Activated CD4-positive, alpha-beta T cell treated with anti-CD3 and anti-CD28 coated beads for 36 hours (primary cell): ENCODE measurements at regions of chr2 and their contacts with region 1.

Region 1: DNA sequence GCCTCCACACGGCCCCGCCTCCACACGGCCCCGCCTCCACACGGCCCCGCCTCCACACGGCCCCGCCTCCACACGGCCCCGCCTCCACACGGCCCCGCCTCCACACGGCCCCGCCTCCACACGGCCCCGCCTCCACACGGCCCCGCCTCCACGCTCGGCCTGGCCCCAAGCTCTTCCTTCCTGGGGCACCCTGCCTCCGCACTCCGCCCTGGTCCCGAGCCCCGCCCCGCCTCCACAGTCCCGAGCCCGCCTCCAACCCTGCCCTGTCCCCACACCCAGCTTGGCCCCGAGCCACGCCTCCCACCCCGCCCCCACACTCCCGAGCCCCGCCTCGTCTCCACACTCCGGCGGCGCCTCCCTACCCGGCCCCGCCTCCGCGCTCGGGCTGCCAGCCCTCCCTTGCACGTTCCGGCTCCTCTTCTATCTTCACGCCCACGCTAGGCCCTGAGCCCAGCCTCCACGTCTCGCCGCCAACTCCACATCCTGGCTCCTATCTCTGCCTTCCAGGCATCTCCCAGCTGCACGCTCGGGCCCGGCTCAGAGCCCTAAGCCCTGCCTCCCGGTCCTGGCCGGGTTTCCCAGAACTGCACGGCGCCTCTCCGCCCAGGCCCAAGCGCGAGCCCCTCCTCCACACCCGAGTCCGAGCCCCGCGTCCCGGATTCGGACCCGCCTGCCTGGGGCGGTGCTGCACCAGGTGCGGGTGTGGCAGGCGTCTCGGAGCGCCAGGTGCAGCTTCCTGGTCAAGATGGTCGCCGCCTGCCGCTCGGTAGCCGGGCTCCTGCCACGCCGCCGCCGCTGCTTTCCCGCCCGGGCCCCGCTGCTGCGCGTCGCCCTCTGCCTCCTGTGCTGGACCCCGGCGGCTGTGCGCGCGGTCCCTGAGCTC is at the start of gene TMEM87B:
- DNase-seq: peak; percentile 100
- ATAC-seq: peak; percentile 79
- H3K4me3 Mint-ChIP-seq: peak within 1 kb of the TSS; percentile 97
- H3K27ac Mint-ChIP-seq: peak within 1 kb of the TSS; percentile 99
- H3K4me1 Mint-ChIP-seq: peaks cover 37% of the 10 kb centered on the region
- H3K27me3 Mint-ChIP-seq: no peaks in the 10 kb centered on the region
- total RNA-seq, gene TMEM87B: 14.5 to 17.6 TPM

Region 2: GRCh38 chr2:111883661-111884591 is 171.2 kb before region 1 on chr2 and contains the start of gene ANAPC1:
- CTCF ChIA-PET with region 1: interaction called, 19 read pairs
- POLR2A ChIA-PET with region 1: interaction called, 3 read pairs
- intact Hi-C with region 1: loop called (anchors 1 to 2 kb)
- DNase-seq: peak; percentile 92
- ATAC-seq: peak; percentile 95
- H3K4me3 Mint-ChIP-seq: peak within 1 kb of the TSS; percentile 85
- H3K27ac Mint-ChIP-seq: peak within 1 kb of the TSS; percentile 93
- H3K4me1 Mint-ChIP-seq: peaks cover 24% of the 10 kb centered on the region
- H3K27me3 Mint-ChIP-seq: no peaks in the 10 kb centered on the region
- total RNA-seq, gene ANAPC1: 85.1 to 113 TPM

Region 3: DNA sequence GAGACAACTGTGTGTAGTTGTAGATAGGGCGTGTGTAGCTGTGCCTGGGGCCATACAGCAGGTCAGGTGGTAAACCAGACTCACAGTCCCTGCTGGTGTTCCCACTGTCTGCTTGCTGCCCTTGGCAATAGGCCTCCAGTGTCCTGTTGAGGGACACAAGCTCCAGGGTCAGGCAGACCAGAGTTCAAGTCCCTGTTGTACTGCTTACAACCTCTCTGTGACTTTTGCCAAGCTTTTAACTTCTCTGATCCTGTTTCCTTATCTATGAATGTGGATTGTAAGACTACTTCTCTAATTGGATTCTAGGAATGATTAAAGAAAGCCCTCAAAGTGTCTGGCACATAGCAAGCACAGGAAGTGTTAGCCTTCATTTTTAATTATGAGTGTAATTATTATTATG is 88.1 kb before region 1 on chr2:
- CTCF ChIA-PET with region 1: no interaction called
- POLR2A ChIA-PET with region 1: no interaction called
- intact Hi-C with region 1: no loop called
- DNase-seq: no peak
- ATAC-seq: no peak
- H3K4me3 Mint-ChIP-seq: no peak overlapping the region
- H3K27ac Mint-ChIP-seq: no peak overlapping the region
- H3K4me1 Mint-ChIP-seq: no peaks in the 10 kb centered on the region
- H3K27me3 Mint-ChIP-seq: peaks cover 2% of the 10 kb centered on the region

Region 4: DNA sequence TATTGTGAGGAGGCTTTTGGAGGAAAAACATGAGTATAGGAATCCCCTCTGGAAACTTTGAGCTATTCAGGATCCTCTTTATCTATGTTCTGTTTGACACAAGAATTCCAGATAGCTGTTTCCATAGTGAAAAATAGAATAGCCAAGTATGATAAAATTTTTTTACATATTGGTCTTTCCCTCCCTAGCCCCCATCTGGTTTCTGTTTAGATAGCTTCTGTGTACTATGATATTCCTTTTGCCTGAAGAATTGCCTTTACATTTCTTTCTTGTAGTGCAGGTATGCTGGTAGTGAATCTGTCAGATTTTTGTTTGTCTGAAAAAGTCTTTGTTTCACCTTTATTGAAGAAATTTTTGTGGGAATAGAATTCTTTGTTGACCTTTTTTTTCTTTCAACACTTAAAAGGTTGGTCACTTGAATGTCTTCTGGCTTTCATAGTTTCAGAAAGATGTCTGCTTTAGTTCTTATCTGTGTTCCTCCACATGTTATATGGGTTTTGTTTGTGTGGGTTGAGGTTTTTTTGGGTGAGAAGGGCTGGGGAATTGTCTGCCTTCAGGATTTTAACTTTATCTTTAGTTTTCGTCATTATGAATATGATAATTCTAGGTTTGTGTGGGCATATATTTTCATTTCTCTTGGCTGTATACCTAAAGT is 53.2 kb after region 1 on chr2:
- CTCF ChIA-PET with region 1: interaction called, 3 read pairs
- POLR2A ChIA-PET with region 1: no interaction called
- intact Hi-C with region 1: loop called in 1 of 2 experiments (anchors 5 kb)
- DNase-seq: no peak
- ATAC-seq: no peak
- H3K4me3 Mint-ChIP-seq: no peak overlapping the region
- H3K27ac Mint-ChIP-seq: no peak overlapping the region
- H3K4me1 Mint-ChIP-seq: peaks cover 16% of the 10 kb centered on the region
- H3K27me3 Mint-ChIP-seq: no peaks in the 10 kb centered on the region

Region 5: GRCh38 chr2:112275306-112275886 is 220.3 kb after region 1 on chr2 and contains the start of gene ZC3H6:
- CTCF ChIA-PET with region 1: no interaction called
- POLR2A ChIA-PET with region 1: no interaction called
- intact Hi-C with region 1: loop called (anchors 1 to 2 kb)
- DNase-seq: peak; percentile 100
- ATAC-seq: peak; percentile 98
- H3K4me3 Mint-ChIP-seq: peak within 1 kb of the TSS; percentile 90
- H3K27ac Mint-ChIP-seq: peak within 1 kb of the TSS; percentile 97
- H3K4me1 Mint-ChIP-seq: peaks cover 26% of the 10 kb centered on the region
- H3K27me3 Mint-ChIP-seq: no peaks in the 10 kb centered on the region
- total RNA-seq, gene ZC3H6: 15.1 to 15.3 TPM

Region 6: GRCh38 chr2:112584134-112584890 is 529.2 kb after region 1 on chr2 and contains the start of gene CHCHD5:
- CTCF ChIA-PET with region 1: no interaction called
- POLR2A ChIA-PET with region 1: no interaction called
- intact Hi-C with region 1: loop called in 1 of 2 experiments (anchors 1 kb)
- DNase-seq: peak; percentile 96
- ATAC-seq: peak; percentile 89
- H3K4me3 Mint-ChIP-seq: peak within 1 kb of the TSS; percentile 95
- H3K27ac Mint-ChIP-seq: peak within 1 kb of the TSS; percentile 93
- H3K4me1 Mint-ChIP-seq: peaks cover 28% of the 10 kb centered on the region
- H3K27me3 Mint-ChIP-seq: no peaks in the 10 kb centered on the region
- total RNA-seq, gene CHCHD5: 34.4 to 37.0 TPM